ENCODE measurements at regions of chr3 and their contacts with region 1.

Region 1: GRCh38 chr3:187974871-187975271 is 179.1 kb upstream of the LPP start:
- DNase-seq: peak in 2 of 5 donors; percentile 20 to 46
- H3K4me3 ChIP-seq: peak overlapping the region; percentile 29
- H3K4me3 Mint-ChIP-seq: peak overlapping the region; percentile 40 to 78 (median 65)
- H3K27ac ChIP-seq: no peak overlapping the region
- H3K27ac Mint-ChIP-seq: peak overlapping the region; percentile 75 to 95 (median 92)
- H3K4me1 ChIP-seq: peaks cover 46% of the 10 kb centered on the region
- H3K4me1 Mint-ChIP-seq: peaks cover 53 to 56% (median 54%) of the 10 kb centered on the region in 3 donors
- H3K27me3 ChIP-seq: no peaks in the 10 kb centered on the region
- H3K27me3 Mint-ChIP-seq: no peaks in the 10 kb centered on the region

Region 2: DNA sequence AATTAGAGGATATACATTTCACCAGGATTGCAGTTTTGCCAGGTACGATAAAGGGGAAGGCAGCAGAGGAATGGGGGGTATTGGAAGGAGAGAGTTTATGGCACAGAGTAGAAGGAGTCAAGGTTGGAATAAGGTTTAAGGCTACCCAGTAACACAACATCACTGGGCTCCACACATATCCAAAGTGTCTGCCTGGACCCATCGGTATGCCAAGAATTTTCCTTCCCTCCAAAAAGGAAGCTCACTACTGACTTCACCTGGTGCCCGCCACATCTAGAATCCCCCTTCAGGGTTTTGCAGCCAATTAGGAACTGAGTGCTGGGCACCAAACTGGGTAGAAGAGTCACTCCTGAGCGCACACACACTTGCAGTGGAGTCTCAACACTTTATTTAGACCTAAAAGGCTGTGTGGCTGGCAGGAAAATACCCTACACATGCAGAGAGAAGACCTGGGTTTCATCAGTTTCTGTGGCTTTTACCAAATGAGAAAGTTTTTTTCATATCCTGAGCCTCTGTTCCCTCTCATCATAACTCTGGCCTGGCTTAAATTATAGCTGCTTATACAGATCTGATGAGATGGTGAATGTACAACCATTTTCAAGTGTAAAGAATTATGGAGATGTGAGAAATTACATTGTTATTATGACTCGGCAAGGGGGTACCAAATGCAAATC is 11.7 kb before region 1 on chr3:
- CTCF ChIA-PET with region 1: interaction called, 10 read pairs
- POLR2A ChIA-PET with region 1: interaction called, 3 read pairs
- DNase-seq: no peak
- H3K4me3 ChIP-seq: no peak overlapping the region
- H3K4me3 Mint-ChIP-seq: no peak overlapping the region
- H3K27ac ChIP-seq: no peak overlapping the region
- H3K27ac Mint-ChIP-seq: peak overlapping the region in 1 of 8 donors; percentile 30
- H3K4me1 ChIP-seq: peaks cover 22% of the 10 kb centered on the region
- H3K4me1 Mint-ChIP-seq: peaks cover 15 to 18% (median 15%) of the 10 kb centered on the region in 3 donors
- H3K27me3 ChIP-seq: no peaks in the 10 kb centered on the region
- H3K27me3 Mint-ChIP-seq: peaks cover 0 to 2% of the 10 kb centered on the region in 2 donors

Measured in CD8-positive, alpha-beta memory T cell (primary cell).